Adrenal gland (tissue), 19 donors: ENCODE measurements at regions of chr12 and their contacts with region 1.

Region 1: DNA sequence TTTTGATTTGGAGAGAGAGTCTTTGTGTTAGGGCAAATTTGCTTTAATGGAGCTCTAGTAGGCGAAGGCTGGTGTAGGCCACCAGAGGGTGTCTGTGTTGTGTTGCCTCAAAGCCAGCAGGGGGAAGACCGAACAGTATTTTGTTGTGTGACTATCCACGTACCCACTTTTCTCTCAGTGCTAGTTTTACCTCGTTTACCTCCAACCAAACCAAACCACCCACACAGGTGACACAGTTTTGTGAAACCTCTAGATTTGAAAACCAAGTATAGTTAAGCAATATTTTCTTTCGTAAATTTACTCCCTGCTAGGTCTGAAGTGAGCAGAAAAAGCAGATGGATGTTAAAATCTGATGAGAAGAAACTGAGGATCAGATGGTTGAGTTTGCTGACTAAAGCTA is 36.3 kb upstream of the NPFF start:
- DNase-seq: peak; percentile 45 to 87 (median 73)
- H3K4me3 ChIP-seq: no peak overlapping the region
- H3K27ac ChIP-seq: peak overlapping the region in 3 of 5 donors; percentile 7 to 53 (median 51)
- H3K4me1 ChIP-seq: peaks cover 7 to 18% of the 10 kb centered on the region in 2 donors
- H3K27me3 ChIP-seq: no peaks in the 10 kb centered on the region
- CTCF ChIP-seq: peak; percentile 69 to 99 (median 92)
- POLR2A ChIP-seq: no peak

Region 2: GRCh38 chr12:53675651-53676453 is 132.3 kb after region 1 on chr12 and contains the start of gene ATP5MC2:
- intact Hi-C with region 1: loop called (anchors 5 kb)
- DNase-seq: peak; percentile 96 to 99 (median 98)
- H3K4me3 ChIP-seq: peak within 1 kb of the TSS in 3 of 4 donors; percentile 70 to 81 (median 80)
- H3K27ac ChIP-seq: peak within 1 kb of the TSS; percentile 84 to 96 (median 89)
- H3K4me1 ChIP-seq: peaks cover 15 to 50% of the 10 kb centered on the region in 2 donors
- H3K27me3 ChIP-seq: no peaks in the 10 kb centered on the region
- CTCF ChIP-seq: peak; percentile 97 to 100 (median 100)
- POLR2A ChIP-seq: peak in 1 of 2 donors; percentile 76
- total RNA-seq, gene ATP5MC2: 351 to 546 (median 459) TPM

Region 3: DNA sequence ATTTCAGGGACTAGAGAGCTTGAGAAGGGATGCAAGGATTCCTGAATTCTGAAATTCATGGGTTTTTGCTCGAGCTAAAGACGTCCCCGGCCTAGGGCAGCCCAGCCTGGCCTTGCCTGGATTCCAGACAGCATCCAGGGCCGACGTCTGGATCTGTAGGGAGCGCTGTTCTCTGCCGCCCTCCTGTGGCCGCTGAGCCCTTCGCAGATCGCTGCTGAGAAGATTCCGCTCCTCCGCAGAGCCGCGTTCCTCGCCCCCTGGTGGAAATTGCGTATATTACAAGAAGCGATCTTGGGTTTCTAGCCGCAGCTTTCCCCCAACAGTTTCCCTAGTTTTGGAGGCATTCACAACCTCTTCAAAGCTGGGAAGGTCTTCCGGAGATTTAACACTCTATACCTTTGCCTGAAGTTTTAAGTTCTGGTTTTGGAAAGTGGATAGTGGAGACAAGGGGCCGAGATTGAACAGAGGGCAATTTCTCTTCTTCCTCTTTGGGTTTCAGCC is 203.1 kb after region 1 on chr12:
- intact Hi-C with region 1: loop called in 1 of 2 experiments (anchors 10 kb)
- DNase-seq: peak; percentile 91 to 97 (median 95)
- H3K4me3 ChIP-seq: no peak overlapping the region
- H3K27ac ChIP-seq: no peak overlapping the region
- H3K4me1 ChIP-seq: peaks cover 11% of the 10 kb centered on the region in 2 donors
- H3K27me3 ChIP-seq: peaks cover 42% of the 10 kb centered on the region
- CTCF ChIP-seq: peak; percentile 100
- POLR2A ChIP-seq: no peak